ENCODE measurements at regions of chr6 and their contacts with region 1.

Region 1: GRCh38 chr6:138109042-138109997 is 2.1 kb upstream of the PERP start:
- DNase-seq: peak; percentile 79
- H3K27ac ChIP-seq: no peak overlapping the region
- CTCF ChIP-seq: peak; percentile 96

Region 2: GRCh38 chr6:138001750-138002349 is 107.5 kb before region 1 on chr6:
- CTCF ChIA-PET with region 1: interaction called, 10 read pairs
- POLR2A ChIA-PET with region 1: interaction called, 5 read pairs
- DNase-seq: peak; percentile 37
- H3K27ac ChIP-seq: no peak overlapping the region
- CTCF ChIP-seq: peak; percentile 87

Region 3: DNA sequence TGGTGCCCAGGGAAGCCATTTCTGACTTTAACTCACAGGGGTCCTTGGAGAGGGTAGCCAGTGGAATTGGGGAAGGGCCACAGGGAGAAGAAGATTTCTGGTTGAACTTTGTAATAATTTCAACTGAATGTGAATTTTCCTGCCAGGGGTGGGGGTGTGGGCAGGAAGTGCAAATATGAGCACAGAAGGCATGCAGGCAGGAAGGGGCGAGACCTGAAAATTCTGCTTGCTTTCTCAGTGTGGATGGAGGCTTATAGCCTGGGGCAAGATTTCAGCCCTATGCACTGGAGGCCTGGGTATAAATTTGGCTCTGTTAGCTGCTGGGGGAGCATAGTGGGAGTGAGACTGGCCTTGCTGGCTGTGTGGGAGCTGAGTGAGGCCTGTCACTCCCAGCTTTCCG is 56.6 kb before region 1 on chr6:
- CTCF ChIA-PET with region 1: no interaction called
- POLR2A ChIA-PET with region 1: no interaction called
- DNase-seq: no peak
- H3K27ac ChIP-seq: no peak overlapping the region
- CTCF ChIP-seq: no peak

Region 4: DNA sequence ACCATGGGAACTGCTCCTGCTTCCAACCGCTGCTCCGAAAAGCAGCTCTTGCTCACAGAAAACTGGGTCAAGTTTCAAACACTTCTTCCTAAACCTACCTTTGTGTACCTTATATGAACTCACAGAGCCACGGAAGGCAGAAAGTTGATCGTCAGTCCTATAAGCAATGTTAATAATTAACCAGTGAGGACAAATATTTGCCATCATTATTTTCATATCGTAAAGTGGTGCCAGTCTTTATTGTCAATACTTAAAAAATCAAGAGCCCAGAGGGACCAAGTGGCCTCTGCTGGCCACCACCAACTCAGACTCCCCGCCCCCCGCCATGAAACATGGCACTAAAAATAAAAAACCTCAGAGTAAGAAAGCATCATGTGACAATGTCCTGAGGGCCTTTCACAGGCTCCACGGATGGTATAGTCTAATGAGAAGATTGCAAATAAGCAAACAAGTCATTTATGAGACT is 118.0 kb after region 1 on chr6:
- CTCF ChIA-PET with region 1: no interaction called
- POLR2A ChIA-PET with region 1: no interaction called
- DNase-seq: no peak
- H3K27ac ChIP-seq: no peak overlapping the region
- CTCF ChIP-seq: no peak

Region 5: DNA sequence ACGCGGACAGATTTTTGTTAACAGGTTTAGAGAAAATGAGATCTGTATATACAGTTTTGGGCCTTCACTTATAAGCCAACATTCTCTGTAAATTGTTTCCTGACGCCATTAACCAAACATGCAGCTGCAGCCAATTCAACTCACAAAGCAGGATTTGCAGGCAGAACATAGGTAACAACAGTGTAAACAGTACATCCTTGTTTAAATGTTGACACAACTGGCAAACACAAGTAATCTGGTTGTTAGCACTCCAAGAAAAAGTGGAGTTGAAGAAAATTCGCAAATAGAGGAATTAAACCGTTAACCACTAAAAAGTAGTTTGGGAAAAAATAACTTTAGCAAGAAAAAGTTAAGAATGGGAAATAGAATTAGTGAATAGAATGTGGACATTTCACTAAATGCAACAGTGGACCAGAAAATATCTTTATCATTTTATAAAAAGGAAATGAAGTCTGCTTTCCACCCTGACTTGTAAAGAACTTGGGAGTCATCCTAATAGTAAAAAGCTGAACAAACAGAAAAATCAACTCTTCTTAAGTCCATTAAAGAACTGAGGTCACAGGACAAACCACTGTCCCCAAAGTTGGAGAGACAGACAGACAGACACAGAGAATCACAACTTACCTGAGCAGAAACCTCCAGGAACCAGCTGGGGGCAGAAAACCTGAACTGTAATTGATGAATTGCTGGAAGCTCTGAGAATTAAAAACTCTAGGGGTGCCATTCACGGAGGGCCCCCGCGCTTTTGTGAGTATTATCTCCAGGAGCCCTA is 278.5 kb after region 1 on chr6:
- CTCF ChIA-PET with region 1: no interaction called
- POLR2A ChIA-PET with region 1: no interaction called
- DNase-seq: no peak
- H3K27ac ChIP-seq: no peak overlapping the region
- CTCF ChIP-seq: no peak

Measured in RWPE1 (cell line).